PC-9 (cell line): ENCODE measurements at regions of chr11 and their contacts with region 1.

Region 1: DNA sequence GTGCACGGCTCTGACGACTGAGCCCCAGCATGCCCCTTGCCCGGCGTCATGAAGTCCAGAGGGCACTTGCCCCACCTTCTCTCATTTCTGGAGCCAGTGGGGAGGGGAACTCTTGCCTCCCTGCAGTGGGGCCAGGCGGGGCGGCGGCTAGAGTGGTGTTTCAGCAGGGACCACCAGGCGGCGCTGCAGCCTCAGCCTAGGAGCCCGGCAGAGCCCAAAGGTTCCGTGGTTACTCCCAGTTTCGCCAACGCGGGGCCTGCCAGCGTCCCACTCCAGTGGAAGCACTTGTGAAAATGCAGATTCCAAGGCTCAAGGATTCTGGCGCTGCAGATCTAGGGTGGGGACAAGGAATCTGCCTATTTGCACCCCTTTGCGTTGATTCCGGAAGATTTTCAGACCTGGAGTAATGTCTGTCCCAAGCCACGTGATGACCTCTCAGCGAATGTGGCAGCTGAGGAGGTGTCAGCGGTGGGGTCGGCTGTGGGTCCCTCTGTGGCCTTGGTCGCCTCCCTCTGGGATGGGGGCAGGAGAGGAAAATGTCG is 55.7 kb downstream of the CD82 start:
- DNase-seq: peak in 1 of 2 experiments; percentile 72
- H3K4me3 ChIP-seq: no peak overlapping the region
- H3K27ac ChIP-seq: no peak overlapping the region
- H3K4me1 ChIP-seq: no peaks in the 10 kb centered on the region
- H3K27me3 ChIP-seq: 0 out of 2 replicates have a peak, but pooled peaks cover under 1% of the 10 kb centered on the region
- CTCF ChIP-seq: peak; percentile 99

Region 2: DNA sequence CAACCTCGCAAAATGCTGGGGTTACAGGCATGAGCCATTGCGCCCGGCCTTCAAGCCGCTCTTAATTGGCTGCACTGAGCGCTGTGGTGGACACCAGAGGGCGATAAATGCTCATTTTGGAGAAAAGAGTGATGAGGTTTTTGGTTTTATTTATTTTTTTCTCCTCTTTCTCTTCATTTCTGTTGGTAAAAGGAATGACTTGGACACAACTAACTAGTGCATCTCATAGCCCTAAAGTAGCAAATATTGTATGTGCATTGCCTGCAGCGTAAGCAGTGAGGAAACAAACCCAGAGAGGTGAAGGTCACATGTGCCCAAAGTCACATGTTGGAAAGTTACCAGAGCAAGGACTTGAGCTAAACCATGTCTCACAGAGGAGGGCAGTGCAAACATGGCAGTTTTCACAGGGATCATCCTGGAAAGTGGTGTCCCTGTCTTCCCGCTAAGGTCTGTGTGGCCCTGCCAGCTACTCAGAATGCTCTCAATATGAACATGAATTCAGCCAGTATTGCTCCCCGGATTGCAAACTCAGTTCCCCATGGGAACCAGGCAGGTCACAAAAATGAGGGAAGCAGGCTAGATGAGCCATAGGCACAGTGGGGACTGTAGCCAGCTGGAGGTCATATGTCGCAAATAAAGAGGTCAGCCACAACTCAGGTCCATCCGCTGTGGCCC is 64.3 kb before region 1 on chr11:
- CTCF ChIA-PET with region 1: interaction called, 30 read pairs
- POLR2A ChIA-PET with region 1: no interaction called
- intact Hi-C with region 1: loop called (anchors 1 kb)
- DNase-seq: peak; percentile 47 to 58
- H3K4me3 ChIP-seq: no peak overlapping the region
- H3K27ac ChIP-seq: no peak overlapping the region
- H3K4me1 ChIP-seq: no peaks in the 10 kb centered on the region
- H3K27me3 ChIP-seq: no peaks in the 10 kb centered on the region
- CTCF ChIP-seq: peak; percentile 86

Region 3: GRCh38 chr11:44727373-44728287 is 106.4 kb after region 1 on chr11:
- CTCF ChIA-PET with region 1: no interaction called
- POLR2A ChIA-PET with region 1: no interaction called
- intact Hi-C with region 1: loop called (anchors 5 kb)
- DNase-seq: peak in 1 of 2 experiments; percentile 58
- H3K4me3 ChIP-seq: no peak overlapping the region
- H3K27ac ChIP-seq: no peak overlapping the region
- H3K4me1 ChIP-seq: no peaks in the 10 kb centered on the region
- H3K27me3 ChIP-seq: peaks cover 16% of the 10 kb centered on the region; the same call in 1 of the 2 replicates
- CTCF ChIP-seq: peak; percentile 87

Region 4: DNA sequence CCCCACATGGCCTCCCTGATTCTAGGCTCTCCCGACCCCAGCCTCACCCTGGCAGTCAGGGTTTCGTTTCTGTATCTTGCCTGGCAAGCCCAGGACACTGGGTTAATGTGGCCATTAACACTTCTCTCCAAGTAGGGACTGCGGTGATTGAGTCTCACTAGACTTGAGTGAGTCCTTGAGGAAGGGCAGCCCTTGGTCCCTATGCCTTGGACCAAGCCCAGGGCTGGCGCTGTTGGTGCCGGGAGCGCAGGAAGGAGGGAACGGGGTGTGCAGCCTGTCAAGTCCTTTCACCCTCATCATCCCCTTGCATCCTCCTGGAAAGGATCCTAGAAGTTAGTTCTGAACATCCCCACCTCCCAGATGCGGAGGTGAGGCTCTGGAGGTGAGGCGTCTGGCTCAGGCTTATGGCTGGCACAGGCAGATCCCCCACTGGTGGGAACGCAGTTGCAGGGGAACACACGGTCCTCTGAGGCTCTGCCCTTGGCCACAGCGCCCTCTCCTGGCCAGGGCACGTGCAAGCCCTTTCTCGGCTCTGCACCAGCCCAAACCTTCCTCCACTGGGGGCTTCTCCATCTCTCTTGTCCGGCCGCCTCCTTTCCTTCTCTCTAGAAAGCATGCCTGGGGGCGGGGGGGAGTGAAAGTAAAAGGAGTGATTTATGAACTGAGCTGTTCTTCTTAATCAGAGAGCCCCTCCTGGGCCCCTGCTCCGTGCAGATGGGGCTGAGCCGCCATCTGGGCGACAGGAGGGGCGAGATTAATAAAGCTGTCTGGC is 272.8 kb after region 1 on chr11:
- CTCF ChIA-PET with region 1: no interaction called
- POLR2A ChIA-PET with region 1: no interaction called
- intact Hi-C with region 1: loop called (anchors 5 kb)
- DNase-seq: peak in 1 of 2 experiments; percentile 37
- H3K4me3 ChIP-seq: no peak overlapping the region
- H3K27ac ChIP-seq: no peak overlapping the region
- H3K4me1 ChIP-seq: no peaks in the 10 kb centered on the region
- H3K27me3 ChIP-seq: peaks cover 84% of the 10 kb centered on the region
- CTCF ChIP-seq: peak; percentile 85

Region 5: GRCh38 chr11:45102810-45103621 is 481.8 kb after region 1 on chr11:
- CTCF ChIA-PET with region 1: interaction called, 3 read pairs
- POLR2A ChIA-PET with region 1: no interaction called
- intact Hi-C with region 1: loop called (anchors 2 kb)
- DNase-seq: peak in 1 of 2 experiments; percentile 44
- H3K4me3 ChIP-seq: no peak overlapping the region
- H3K27ac ChIP-seq: no peak overlapping the region
- H3K4me1 ChIP-seq: no peaks in the 10 kb centered on the region
- H3K27me3 ChIP-seq: peaks cover 46% of the 10 kb centered on the region
- CTCF ChIP-seq: peak; percentile 99